Calu3 (cell line): ENCODE measurements at regions of chr20 and their contacts with region 1.

Region 1: DNA sequence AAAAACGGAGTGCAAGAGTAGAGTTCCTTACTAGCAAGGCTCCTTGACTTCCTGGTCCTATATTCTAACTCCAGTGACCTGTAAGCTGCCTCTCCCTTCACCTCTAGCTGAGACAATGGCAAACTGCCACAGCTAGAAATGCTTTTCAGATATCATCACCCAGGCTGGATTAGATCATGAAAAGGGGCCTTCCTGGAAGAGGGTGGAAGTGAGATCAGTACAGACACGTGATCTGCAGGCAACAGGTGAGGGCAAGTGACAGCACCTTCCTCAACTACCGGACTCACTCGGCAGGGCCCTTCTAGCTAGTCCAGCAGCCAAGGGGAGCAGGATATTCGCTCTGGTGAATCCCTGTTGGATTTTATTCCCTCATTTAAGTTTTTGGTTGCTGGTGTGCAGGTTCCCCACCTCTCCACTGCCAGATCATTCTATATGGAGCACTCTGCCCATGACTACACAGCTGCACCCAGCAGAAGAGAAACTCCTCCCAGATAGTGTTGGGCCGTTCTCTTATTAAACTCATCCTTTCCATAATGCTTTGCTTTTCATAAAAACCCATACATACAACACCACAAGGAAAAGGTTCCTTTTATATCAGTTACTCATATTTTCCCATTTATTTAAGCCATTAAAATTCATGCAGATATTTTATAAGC is 26.4 kb upstream of the FAM83C start:
- DNase-seq: peak; percentile 81
- H3K4me3 Mint-ChIP-seq: peak overlapping the region; percentile 17
- H3K27ac Mint-ChIP-seq: peak overlapping the region; percentile 97
- H3K4me1 Mint-ChIP-seq: peaks cover 56% of the 10 kb centered on the region
- H3K27me3 Mint-ChIP-seq: no peaks in the 10 kb centered on the region
- CTCF ChIP-seq: no peak

Region 2: DNA sequence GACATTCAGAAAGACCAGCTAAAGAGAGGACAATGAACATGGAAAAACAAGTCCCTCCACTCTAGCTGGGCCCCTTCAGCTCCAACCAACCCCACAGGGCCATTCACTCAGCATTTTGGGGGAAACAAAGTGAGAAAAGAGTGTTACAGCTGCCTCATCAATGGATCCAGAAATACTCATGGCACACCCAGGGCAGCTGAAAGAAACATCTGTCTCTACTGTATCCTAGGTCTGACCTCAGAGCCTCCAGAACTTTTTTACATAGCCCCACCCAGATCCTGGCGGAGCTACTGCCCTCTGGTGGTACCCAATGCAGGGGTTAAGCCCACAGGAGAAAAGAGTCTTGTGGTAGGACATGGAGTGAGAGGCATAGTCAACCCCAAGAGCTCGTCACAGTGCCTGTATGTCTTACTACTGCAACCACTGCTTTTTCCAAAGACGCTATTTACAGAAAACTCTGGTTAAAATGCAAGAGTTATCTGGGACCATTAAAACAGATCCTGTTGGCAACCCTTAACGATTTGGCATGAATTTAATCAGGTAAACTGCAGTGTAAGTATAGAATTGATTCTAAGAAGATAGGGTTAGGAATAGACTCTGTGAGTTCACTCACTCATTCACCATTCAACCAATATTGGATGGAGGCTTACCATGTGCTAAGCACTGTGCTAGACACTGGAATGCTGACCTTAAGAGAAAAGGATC is 11.0 kb after region 1 on chr20:
- CTCF ChIA-PET with region 1: interaction called, 11 read pairs
- intact Hi-C with region 1: no loop called
- DNase-seq: peak; percentile 84
- H3K4me3 Mint-ChIP-seq: no peak overlapping the region
- H3K27ac Mint-ChIP-seq: peak overlapping the region; percentile 34
- H3K4me1 Mint-ChIP-seq: peaks cover 54% of the 10 kb centered on the region
- H3K27me3 Mint-ChIP-seq: no peaks in the 10 kb centered on the region
- CTCF ChIP-seq: peak; percentile 87